Right cardiac atrium (tissue), 5 donors: ENCODE measurements at regions of chr4 and their contacts with region 1.

Region 1: DNA sequence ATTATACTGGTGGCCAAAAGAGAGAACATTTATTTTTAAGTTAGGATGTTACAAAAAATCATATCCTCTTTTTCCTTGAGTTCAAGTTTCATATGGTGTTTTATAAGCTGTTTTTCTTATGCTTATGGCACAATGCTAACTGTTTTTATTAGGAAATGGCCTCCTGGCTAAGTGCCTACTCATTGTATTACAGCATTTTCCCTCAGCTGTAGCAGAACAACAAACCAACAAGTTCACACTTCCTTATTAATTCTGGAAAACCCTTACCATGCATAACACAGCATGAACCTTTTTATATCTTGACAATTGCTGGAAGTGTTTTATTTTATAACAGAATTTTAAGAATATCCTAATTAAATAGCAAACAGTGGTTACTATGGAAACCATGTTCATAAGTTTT is 165.8 kb downstream of the GASK1B start:
- DNase-seq: no peak
- ATAC-seq: peak; percentile 79 to 88
- H3K4me3 ChIP-seq: no peak overlapping the region
- H3K27ac ChIP-seq: no peak overlapping the region
- H3K4me1 ChIP-seq: peaks cover 5% of the 10 kb centered on the region
- H3K27me3 ChIP-seq: no peaks in the 10 kb centered on the region

Region 2: GRCh38 chr4:158065176-158065575 is 58.2 kb after region 1 on chr4:
- intact Hi-C with region 1: no loop called
- DNase-seq: no peak
- ATAC-seq: no peak
- H3K4me3 ChIP-seq: no peak overlapping the region
- H3K27ac ChIP-seq: no peak overlapping the region
- H3K4me1 ChIP-seq: peaks cover 1% of the 10 kb centered on the region
- H3K27me3 ChIP-seq: no peaks in the 10 kb centered on the region

Region 3: DNA sequence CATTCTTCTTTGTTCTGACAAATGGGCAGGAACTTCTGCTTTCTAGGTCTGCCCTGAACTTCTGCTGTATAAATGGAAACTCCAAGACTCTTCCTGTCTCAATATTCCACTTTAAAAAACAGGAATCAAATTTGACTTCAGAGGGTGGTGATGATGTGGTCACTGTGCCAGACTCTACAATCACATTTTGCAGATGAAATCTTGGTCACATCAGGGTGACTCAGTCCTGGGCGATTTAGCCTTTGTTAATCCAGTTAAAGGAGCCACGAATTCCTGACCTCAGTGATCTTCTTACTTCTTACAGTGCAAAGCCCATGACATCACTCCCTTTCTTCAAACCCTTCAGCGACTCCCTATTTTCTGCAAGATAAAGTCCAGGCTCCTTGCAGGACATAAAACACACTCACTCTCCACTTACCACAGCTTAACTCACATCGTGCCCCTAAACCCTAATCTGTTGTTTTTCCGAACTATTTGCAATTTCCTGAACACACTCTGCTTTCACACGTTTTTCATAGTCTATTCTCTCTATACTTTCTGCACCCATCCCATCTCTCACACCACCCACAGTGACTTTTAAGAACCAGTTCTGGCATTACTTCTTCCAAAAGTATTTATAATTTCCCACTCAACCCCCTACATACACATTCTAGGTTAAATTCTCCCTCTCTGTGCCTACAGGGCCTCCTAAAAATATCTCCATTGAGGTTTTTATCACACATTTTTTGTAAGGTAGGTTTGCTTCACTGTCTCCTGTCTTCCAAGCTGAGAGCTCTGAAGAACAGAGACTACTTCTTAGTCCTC is 154.8 kb after region 1 on chr4:
- intact Hi-C with region 1: loop called in 1 of 4 experiments (anchors 5 kb)
- DNase-seq: no peak
- ATAC-seq: peak; percentile 82 to 95
- H3K4me3 ChIP-seq: no peak overlapping the region
- H3K27ac ChIP-seq: peak overlapping the region; percentile 51
- H3K4me1 ChIP-seq: peaks cover 2% of the 10 kb centered on the region
- H3K27me3 ChIP-seq: no peaks in the 10 kb centered on the region

Region 4: DNA sequence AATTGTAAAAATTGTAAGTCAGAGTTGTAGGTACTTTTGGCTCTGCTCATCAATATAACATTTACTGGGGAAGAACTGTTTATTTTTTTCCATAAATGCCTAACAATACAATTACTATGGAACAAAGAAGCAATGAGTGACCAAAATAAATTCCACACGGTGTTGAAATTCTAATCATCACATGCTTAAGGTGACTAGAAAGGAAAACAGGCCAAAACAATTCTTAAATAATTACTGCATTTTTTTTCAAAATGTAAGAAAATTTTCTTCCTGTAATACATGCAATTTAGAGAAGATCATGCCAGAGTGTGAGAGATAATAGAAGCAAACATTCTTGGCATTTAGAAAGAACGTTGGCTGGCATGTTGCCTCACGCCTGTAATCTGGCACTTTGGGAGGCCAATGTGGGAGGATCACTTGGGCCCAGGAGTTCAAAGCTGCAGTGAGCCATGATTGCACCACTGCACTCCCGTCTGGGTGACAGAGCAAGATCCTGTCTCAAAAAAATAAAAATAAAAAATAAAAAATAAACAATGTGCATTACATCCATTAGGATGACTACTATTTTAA is 642.2 kb after region 1 on chr4:
- intact Hi-C with region 1: no loop called
- DNase-seq: peak in 1 of 3 donors; percentile 24
- ATAC-seq: no peak
- H3K4me3 ChIP-seq: no peak overlapping the region
- H3K27ac ChIP-seq: no peak overlapping the region
- H3K4me1 ChIP-seq: no peaks in the 10 kb centered on the region
- H3K27me3 ChIP-seq: no peaks in the 10 kb centered on the region